ENCODE measurements at regions of chr1 and their contacts with region 1.

Region 1: GRCh38 chr1:160006312-160006940 is 25.4 kb downstream of the PIGM start:
- DNase-seq: peak; percentile 62
- ATAC-seq: peak; percentile 76
- H3K4me3 ChIP-seq: no peak overlapping the region
- H3K27ac ChIP-seq: no peak overlapping the region
- H3K4me1 ChIP-seq: no peaks in the 10 kb centered on the region
- H3K27me3 ChIP-seq: peaks cover 31% of the 10 kb centered on the region
- CTCF ChIP-seq: peak; percentile 87
- POLR2A ChIP-seq: no peak
- RAD21 ChIP-seq: peak; percentile 74

Region 2: DNA sequence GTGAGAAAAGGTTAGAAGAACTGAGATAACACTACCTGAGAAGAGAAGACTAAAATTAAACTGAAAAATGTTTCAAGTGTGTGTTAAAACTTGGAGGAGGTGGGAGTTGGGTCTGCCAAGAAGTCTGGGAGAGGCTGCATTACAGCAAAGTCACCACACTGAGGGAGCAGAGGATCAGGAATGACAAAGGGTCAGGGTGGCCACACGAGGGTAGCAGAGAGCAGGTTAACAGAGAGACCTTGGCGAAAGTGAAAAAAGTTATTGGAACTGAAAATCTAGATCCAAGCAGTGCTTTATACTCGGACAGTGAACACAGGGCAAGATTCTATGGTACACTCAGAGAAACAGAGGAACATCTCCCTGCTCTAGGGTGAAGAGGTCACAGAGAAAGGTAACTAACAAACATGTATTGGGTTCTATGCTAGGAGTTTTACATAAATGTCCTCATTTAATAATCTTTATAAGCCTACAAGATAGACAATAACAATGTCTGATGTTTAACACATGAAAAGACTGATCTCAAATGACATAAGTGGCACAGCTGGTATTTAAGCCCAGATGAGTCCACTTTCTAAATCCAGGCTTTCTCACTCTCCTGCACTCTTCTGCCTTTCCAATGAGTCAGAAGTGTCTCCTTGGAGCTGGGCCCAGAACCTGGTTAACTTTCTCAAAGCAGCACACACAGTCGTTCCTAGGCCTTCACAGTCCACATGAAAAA is 845.3 kb before region 1 on chr1:
- CTCF ChIA-PET with region 1: interaction called, 3 read pairs
- POLR2A ChIA-PET with region 1: no interaction called
- dilution Hi-C with region 1: no loop called
- in situ Hi-C with region 1: no loop called
- intact Hi-C with region 1: loop called (anchors 2 kb)
- DNase-seq: peak; percentile 86
- ATAC-seq: peak; percentile 100
- H3K4me3 ChIP-seq: no peak overlapping the region
- H3K27ac ChIP-seq: no peak overlapping the region
- H3K4me1 ChIP-seq: peaks cover 2% of the 10 kb centered on the region; the same call in 1 of the 2 replicates
- H3K27me3 ChIP-seq: no peaks in the 10 kb centered on the region
- CTCF ChIP-seq: peak; percentile 100
- POLR2A ChIP-seq: no peak
- RAD21 ChIP-seq: peak; percentile 95

Region 3: GRCh38 chr1:159798893-159799292 is 207.5 kb before region 1 on chr1:
- CTCF ChIA-PET with region 1: interaction called, 8 read pairs
- POLR2A ChIA-PET with region 1: no interaction called
- dilution Hi-C with region 1: no loop called
- in situ Hi-C with region 1: no loop called
- intact Hi-C with region 1: loop called (anchors 1 kb)
- DNase-seq: peak; percentile 85
- ATAC-seq: peak; percentile 99
- H3K4me3 ChIP-seq: no peak overlapping the region
- H3K27ac ChIP-seq: no peak overlapping the region
- H3K4me1 ChIP-seq: no peaks in the 10 kb centered on the region
- H3K27me3 ChIP-seq: peaks cover 38% of the 10 kb centered on the region
- CTCF ChIP-seq: peak; percentile 82
- POLR2A ChIP-seq: no peak
- RAD21 ChIP-seq: peak; percentile 91

Region 4: GRCh38 chr1:159936273-159936904 is 70.0 kb before region 1 on chr1:
- CTCF ChIA-PET with region 1: interaction called, 48 read pairs
- POLR2A ChIA-PET with region 1: no interaction called
- dilution Hi-C with region 1: no loop called
- in situ Hi-C with region 1: loop called (anchors 5 kb)
- intact Hi-C with region 1: loop called (anchors 1 kb)
- DNase-seq: no peak
- ATAC-seq: peak; percentile 98
- H3K4me3 ChIP-seq: no peak overlapping the region
- H3K27ac ChIP-seq: no peak overlapping the region
- H3K4me1 ChIP-seq: no peaks in the 10 kb centered on the region
- H3K27me3 ChIP-seq: peaks cover 38% of the 10 kb centered on the region
- CTCF ChIP-seq: peak; percentile 93
- POLR2A ChIP-seq: no peak
- RAD21 ChIP-seq: peak; percentile 94

Region 5: DNA sequence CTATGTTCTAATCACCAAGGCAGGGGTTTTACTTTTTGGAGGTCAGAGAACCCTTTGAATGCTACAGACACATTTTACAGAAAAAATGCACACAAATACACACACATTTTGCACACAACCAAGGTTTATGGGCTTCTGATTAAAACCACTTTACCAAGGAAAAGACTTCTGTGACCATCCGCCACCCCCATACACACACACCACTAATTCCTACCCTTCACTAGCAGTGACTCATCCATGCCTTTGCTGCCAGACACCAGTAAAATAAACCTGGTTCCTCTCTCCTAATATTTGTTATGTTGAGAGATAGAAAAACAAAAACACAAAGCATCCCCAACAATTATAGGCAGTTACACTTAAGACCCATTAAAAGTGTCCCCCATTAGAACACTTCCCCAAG is 12.5 kb after region 1 on chr1:
- CTCF ChIA-PET with region 1: interaction called, 34 read pairs
- POLR2A ChIA-PET with region 1: no interaction called
- dilution Hi-C with region 1: no loop called
- in situ Hi-C with region 1: no loop called
- intact Hi-C with region 1: no loop called
- DNase-seq: peak; percentile 58
- ATAC-seq: peak; percentile 94
- H3K4me3 ChIP-seq: no peak overlapping the region
- H3K27ac ChIP-seq: no peak overlapping the region
- H3K4me1 ChIP-seq: peaks cover 6% of the 10 kb centered on the region
- H3K27me3 ChIP-seq: peaks cover 22% of the 10 kb centered on the region
- CTCF ChIP-seq: no peak
- POLR2A ChIP-seq: no peak
- RAD21 ChIP-seq: no peak

Region 6: GRCh38 chr1:160085686-160086455 is 79.4 kb after region 1 on chr1:
- CTCF ChIA-PET with region 1: no interaction called
- POLR2A ChIA-PET with region 1: no interaction called
- dilution Hi-C with region 1: no loop called
- in situ Hi-C with region 1: no loop called
- intact Hi-C with region 1: no loop called
- DNase-seq: peak; percentile 64
- ATAC-seq: peak; percentile 92
- H3K4me3 ChIP-seq: no peak overlapping the region
- H3K27ac ChIP-seq: no peak overlapping the region
- H3K4me1 ChIP-seq: peaks cover 3% of the 10 kb centered on the region; the same call in 1 of the 2 replicates
- H3K27me3 ChIP-seq: peaks cover 41% of the 10 kb centered on the region
- CTCF ChIP-seq: peak; percentile 93
- POLR2A ChIP-seq: no peak
- RAD21 ChIP-seq: peak; percentile 73

Region 7: DNA sequence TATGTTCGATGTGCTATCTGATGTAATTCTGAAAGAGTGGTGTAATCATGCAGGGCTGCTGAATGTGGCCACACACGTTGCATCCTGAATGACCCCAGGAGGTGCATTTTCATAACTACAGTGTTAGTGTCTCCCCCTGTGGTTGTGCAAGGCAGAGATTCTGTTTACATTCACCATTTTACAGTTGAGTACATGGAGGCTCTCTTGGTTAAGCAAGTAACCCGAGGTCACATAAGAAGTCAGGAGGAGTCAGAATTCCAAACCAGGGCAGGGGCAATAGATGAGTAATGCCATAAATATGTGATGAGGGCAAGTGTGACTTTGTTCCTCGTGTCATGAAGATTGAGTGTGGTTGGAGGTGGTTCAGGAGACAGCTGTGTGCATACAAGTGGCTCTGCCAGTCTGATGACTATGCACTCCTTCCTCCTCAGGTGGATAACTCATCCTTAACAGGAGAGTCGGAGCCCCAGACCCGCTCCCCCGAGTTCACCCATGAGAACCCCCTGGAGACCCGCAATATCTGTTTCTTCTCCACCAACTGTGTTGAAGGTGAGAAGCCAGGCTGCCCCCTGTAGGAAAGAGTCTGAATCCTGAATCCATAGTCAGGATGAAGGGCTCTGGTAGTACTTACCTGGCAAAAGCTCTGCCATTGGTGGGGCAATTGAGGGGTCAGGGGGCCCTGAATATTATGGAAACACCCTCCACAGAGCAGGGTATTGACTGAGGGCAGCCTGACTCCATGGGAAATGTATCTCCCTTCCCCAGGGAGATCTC is 118.5 kb after region 1 on chr1:
- CTCF ChIA-PET with region 1: no interaction called
- POLR2A ChIA-PET with region 1: no interaction called
- dilution Hi-C with region 1: no loop called
- in situ Hi-C with region 1: no loop called
- intact Hi-C with region 1: no loop called
- DNase-seq: peak; percentile 89
- ATAC-seq: peak; percentile 83
- H3K4me3 ChIP-seq: no peak overlapping the region
- H3K27ac ChIP-seq: peak overlapping the region; percentile 21; the same call in 1 of the 2 replicates
- H3K4me1 ChIP-seq: peaks cover 17% of the 10 kb centered on the region
- H3K27me3 ChIP-seq: no peaks in the 10 kb centered on the region
- CTCF ChIP-seq: peak; percentile 46
- POLR2A ChIP-seq: no peak
- RAD21 ChIP-seq: no peak